K562 (cell line): ENCODE measurements at regions of chr2 and their contacts with region 1.

Region 1: DNA sequence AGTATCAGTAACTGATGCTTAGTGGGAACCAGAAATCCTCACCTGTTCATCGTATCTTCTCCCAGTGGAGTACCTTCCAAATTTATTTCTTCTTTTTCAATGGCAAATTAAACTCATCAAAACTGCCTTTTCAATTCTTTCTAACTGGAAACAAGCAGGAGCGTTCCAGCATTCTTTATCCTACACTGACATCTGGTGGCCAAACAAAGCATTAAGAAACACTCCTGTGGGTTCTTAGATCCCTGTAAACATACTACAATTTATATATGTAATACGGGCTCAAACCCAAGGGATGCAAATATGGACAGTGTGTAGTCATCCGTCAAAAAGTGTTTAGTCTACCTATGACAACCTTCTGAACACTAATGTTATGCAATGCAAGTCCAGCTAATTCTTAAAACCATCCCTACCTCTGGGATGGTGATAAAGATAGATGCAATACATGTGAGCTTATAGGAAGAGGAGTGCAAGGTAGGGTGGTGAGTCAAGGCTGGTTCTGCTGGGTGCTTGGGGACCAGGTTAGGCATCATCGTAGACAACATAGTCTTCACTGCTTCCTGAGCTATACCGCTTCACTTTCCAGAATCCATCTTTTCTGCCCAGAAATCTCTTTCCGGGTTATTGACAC is 375.0 kb downstream of the CTNNA2 start:
- DNase-seq: peak; percentile 35 to 74 (median 39)
- ATAC-seq: peak; percentile 75
- H3K4me3 ChIP-seq: no peak overlapping the region
- H3K27ac ChIP-seq: no peak overlapping the region
- H3K4me1 ChIP-seq: no peaks in the 10 kb centered on the region
- H3K27me3 ChIP-seq: no peaks in the 10 kb centered on the region; a peak in 1 of 5 replicates
- CTCF ChIP-seq: peak; percentile 38 to 79 (median 50); a peak in 5 of 6 replicates
- EP300 ChIP-seq: no peak
- POLR2A ChIP-seq: no peak
- RAD21 ChIP-seq: peak; percentile 81 to 88

Region 2: DNA sequence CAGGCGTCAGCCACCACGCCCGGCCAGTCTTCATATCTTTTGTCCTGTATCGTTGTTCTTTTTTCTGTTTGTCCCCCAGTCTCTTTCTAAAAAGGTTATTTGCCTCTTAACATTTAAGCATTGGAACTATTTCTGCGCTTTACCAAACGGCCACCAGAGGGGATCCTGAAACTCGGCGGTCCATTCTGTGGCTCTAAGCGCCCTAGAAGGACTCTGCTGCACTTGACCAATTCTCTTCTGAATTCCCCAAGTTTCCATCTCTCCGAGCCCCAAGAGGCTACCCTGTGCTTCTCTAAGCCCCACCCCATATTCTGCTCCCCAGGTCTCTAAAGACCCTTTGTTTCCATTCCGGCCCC is 895.4 kb before region 1 on chr2:
- CTCF ChIA-PET with region 1: no interaction called
- POLR2A ChIA-PET with region 1: no interaction called
- in situ Hi-C with region 1: no loop called
- intact Hi-C with region 1: loop called (anchors 10 kb)
- DNase-seq: peak in 3 of 4 experiments; percentile 10 to 14 (median 13)
- ATAC-seq: peak; percentile 67; the same call in 2 of the 3 replicates
- H3K4me3 ChIP-seq: no peak overlapping the region
- H3K27ac ChIP-seq: no peak overlapping the region
- H3K4me1 ChIP-seq: no peaks in the 10 kb centered on the region
- H3K27me3 ChIP-seq: peaks cover 0 to 21% of the 10 kb centered on the region in 2 experiments; a peak in 2 of 5 replicates
- CTCF ChIP-seq: peak; percentile 24 to 27 (median 27); a peak in 2 of 6 replicates
- EP300 ChIP-seq: no peak
- POLR2A ChIP-seq: no peak
- RAD21 ChIP-seq: no peak

Region 3: DNA sequence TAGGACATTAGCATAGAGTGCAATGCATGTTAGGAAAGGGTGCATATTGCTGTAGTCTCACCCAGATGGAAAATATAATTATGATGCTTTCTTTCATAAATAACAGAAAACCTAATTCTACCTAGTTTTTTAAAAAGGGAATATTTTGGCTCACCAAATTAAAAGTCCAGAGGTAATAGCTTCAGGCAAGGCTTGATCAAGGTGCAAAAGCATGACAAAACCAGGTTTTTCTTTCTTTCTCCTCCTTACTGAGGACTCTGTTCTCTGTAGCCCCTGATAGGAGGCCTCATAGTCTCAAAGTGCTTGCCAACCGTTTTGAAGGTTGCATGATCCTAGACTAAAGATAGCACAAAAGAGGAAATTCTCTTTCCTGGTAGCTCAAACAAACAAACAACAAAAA is 25.1 kb before region 1 on chr2:
- CTCF ChIA-PET with region 1: no interaction called
- POLR2A ChIA-PET with region 1: no interaction called
- in situ Hi-C with region 1: no loop called
- intact Hi-C with region 1: no loop called
- DNase-seq: no peak
- ATAC-seq: no peak
- H3K4me3 ChIP-seq: no peak overlapping the region
- H3K27ac ChIP-seq: no peak overlapping the region
- H3K4me1 ChIP-seq: no peaks in the 10 kb centered on the region
- H3K27me3 ChIP-seq: no peaks in the 10 kb centered on the region
- CTCF ChIP-seq: no peak
- EP300 ChIP-seq: no peak
- POLR2A ChIP-seq: no peak
- RAD21 ChIP-seq: no peak